Body of pancreas (tissue), 4 donors: ENCODE measurements at regions of chr6 and their contacts with region 1.

Region 1: GRCh38 chr6:43769526-43770416 is at the start of gene VEGFA:
- DNase-seq: peak; percentile 89 to 92 (median 90)
- ATAC-seq: peak; percentile 68
- H3K4me3 ChIP-seq: peak within 1 kb of the TSS; percentile 75 to 80
- H3K27ac ChIP-seq: peak within 1 kb of the TSS; percentile 95 to 99 (median 98)
- H3K4me1 ChIP-seq: peaks cover 59% of the 10 kb centered on the region
- H3K27me3 ChIP-seq: no peaks in the 10 kb centered on the region
- CTCF ChIP-seq: peak; percentile 96 to 99 (median 97)
- POLR2A ChIP-seq: peak; percentile 83 to 89 (median 89)
- total RNA-seq, gene VEGFA: 84.8 to 272 TPM

Region 2: DNA sequence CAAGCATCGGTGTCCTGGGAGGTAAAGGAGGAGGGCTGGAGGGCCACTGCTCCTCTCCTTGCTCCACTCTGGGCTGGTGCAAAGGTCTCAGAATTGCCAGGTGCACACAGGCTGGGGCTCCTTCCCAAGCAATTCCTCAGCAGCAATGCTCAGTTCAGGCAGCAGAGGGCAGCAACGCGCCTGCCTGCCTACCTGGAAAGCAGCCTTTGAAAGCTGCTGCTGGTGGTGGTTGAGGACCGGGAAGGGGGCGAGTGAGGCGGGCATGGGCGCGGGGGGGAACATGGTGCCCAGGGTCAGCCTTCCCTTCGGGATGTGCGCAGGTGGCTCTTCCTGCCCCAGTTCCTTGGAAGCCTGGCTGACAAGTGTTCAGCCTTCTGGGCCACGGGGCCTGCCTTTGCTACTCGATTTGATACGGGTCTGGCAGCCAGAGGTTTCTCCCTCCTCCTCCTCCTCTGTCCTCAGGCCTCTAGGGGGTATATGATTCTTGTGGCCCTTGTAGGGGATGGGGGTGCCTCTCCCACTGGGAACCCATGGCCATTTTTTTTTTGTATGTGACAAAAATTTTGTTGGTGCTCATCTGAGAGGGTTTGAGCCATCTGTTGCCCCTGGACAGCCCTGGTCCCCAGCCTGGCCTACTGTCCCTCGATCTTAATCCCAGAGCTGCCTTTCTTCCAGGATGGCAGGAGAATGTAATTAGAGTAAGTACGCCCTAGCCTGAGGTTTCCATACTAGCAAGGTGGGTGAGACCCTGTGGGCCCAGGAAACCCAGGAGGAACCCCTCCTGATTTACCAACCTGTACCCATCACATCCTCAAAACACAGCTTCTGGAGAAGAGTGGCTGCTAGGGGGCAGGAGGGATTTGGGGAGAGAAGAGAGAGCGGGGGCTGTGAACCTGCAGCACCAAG is 102.3 kb before region 1 on chr6:
- intact Hi-C with region 1: loop called (anchors 10 kb)
- DNase-seq: peak; percentile 83 to 92 (median 90)
- ATAC-seq: peak; percentile 87
- H3K4me3 ChIP-seq: no peak overlapping the region
- H3K27ac ChIP-seq: peak overlapping the region in 1 of 4 donors; percentile 22
- H3K4me1 ChIP-seq: peaks cover 33% of the 10 kb centered on the region
- H3K27me3 ChIP-seq: no peaks in the 10 kb centered on the region
- CTCF ChIP-seq: peak; percentile 94 to 97 (median 96)
- POLR2A ChIP-seq: no peak

Region 3: GRCh38 chr6:43687437-43688347 is 82.1 kb before region 1 on chr6 and contains the start of gene MRPS18A:
- intact Hi-C with region 1: no loop called
- DNase-seq: peak; percentile 75 to 85 (median 79)
- ATAC-seq: peak; percentile 96
- H3K4me3 ChIP-seq: peak within 1 kb of the TSS; percentile 49 to 59
- H3K27ac ChIP-seq: peak within 1 kb of the TSS; percentile 20 to 69 (median 48)
- H3K4me1 ChIP-seq: peaks cover 21% of the 10 kb centered on the region
- H3K27me3 ChIP-seq: no peaks in the 10 kb centered on the region
- CTCF ChIP-seq: no peak
- POLR2A ChIP-seq: peak in 2 of 3 donors; percentile 58 to 70
- total RNA-seq, gene MRPS18A: 16.9 to 36.3 TPM

Region 4: DNA sequence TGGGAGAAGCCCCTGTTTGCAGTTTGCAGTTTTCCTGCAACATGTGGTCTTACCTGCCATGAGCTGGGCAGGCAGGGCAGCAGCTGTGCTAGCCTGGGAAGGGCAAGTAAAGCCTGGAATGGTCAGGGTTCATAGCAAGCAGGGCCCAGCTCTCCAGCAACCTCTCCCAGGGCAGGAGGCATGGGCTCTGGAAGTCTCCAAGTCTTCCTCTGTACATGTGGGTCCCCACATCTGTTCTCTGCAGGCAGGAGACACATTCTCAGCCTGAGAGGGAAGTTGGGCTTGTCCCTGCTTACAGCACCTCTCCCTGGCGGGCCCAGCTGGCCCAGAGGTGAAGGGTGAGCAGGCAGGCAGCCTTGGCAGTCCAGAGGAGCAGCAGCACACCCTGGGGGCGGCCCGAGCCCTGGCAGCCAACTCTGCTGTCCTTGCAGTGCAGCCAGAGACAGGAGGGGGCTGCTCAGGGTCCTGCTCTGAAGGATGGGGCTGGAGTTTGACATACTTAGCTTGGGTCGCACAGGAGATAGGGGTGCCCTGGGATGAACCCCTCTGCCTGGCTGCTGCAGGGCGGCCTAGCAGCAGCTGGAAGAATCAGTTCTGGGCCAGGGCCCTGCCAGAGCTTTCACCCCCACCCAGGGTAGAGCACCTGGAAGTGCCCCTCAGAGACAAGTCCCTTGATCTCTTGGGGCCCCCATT is 181.4 kb after region 1 on chr6:
- intact Hi-C with region 1: loop called (anchors 5 kb)
- DNase-seq: peak; percentile 78 to 89 (median 86)
- ATAC-seq: peak; percentile 92
- H3K4me3 ChIP-seq: no peak overlapping the region
- H3K27ac ChIP-seq: no peak overlapping the region
- H3K4me1 ChIP-seq: peaks cover 21% of the 10 kb centered on the region
- H3K27me3 ChIP-seq: no peaks in the 10 kb centered on the region
- CTCF ChIP-seq: peak; percentile 57 to 96 (median 88)
- POLR2A ChIP-seq: no peak

Region 5: DNA sequence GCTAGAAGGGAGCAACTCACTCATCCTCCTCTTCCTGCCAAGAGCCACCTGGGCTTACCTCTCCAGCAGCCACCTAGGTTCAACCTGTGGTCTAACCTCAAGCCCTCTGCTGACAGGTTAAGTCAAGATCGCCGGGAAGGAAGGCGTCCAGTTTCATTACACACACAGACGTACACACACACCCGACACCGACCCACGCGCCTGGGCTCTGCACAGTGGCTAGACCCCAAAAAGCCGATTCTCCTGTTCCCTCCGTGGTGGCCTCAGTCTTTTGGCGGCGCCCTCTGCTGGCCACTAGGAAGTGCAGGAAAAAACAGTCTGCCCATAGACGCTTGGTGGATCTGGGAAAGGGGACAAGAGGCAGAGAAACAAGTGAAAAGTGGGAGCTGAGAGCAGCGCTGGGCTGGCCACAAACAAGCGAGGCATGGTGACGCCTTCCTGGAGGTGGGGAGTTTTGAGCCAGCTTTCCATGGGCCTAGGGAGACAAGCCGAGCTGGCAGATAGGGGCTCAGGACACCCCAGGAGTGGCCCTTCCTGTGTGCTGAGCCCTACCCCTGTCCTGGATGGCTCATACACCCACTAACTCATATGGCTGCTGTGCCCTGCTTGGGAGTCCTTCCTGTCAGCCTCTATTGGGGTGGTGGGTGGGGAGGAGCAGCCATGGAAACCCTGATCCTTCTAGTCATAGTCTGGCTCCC is 304.8 kb after region 1 on chr6:
- intact Hi-C with region 1: loop called (anchors 2 kb)
- DNase-seq: peak; percentile 72 to 76 (median 74)
- ATAC-seq: peak; percentile 55
- H3K4me3 ChIP-seq: no peak overlapping the region
- H3K27ac ChIP-seq: peak overlapping the region in 1 of 4 donors; percentile 36
- H3K4me1 ChIP-seq: peaks cover 34% of the 10 kb centered on the region
- H3K27me3 ChIP-seq: no peaks in the 10 kb centered on the region
- CTCF ChIP-seq: peak; percentile 80 to 93 (median 87)
- POLR2A ChIP-seq: no peak